ENCODE measurements at regions of chr7 and their contacts with region 1.

Region 1: GRCh38 chr7:66125052-66125708 is 10.5 kb downstream of the CRCP start:
- DNase-seq: no peak
- H3K4me3 ChIP-seq: no peak overlapping the region
- H3K4me3 Mint-ChIP-seq: peak overlapping the region in 4 of 8 donors; percentile 0 to 35 (median 10)
- H3K27ac ChIP-seq: no peak overlapping the region
- H3K27ac Mint-ChIP-seq: peak overlapping the region; percentile 0 to 89 (median 41)
- H3K4me1 ChIP-seq: peaks cover 26% of the 10 kb centered on the region
- H3K4me1 Mint-ChIP-seq: peaks cover 30 to 58% (median 40%) of the 10 kb centered on the region in 4 donors
- H3K27me3 ChIP-seq: no peaks in the 10 kb centered on the region
- H3K27me3 Mint-ChIP-seq: no peaks in the 10 kb centered on the region

Region 2: GRCh38 chr7:66157060-66157459 is 31.9 kb after region 1 on chr7:
- CTCF ChIA-PET with region 1: no interaction called
- POLR2A ChIA-PET with region 1: no interaction called
- intact Hi-C with region 1: loop called (anchors 2 kb)
- DNase-seq: no peak
- H3K4me3 ChIP-seq: no peak overlapping the region
- H3K4me3 Mint-ChIP-seq: no peak overlapping the region
- H3K27ac ChIP-seq: no peak overlapping the region
- H3K27ac Mint-ChIP-seq: no peak overlapping the region
- H3K4me1 ChIP-seq: no peaks in the 10 kb centered on the region
- H3K4me1 Mint-ChIP-seq: peaks cover 0 to 3% (median 0%) of the 10 kb centered on the region in 4 donors
- H3K27me3 ChIP-seq: no peaks in the 10 kb centered on the region
- H3K27me3 Mint-ChIP-seq: no peaks in the 10 kb centered on the region

Region 3: GRCh38 chr7:66281678-66282590 is 156.8 kb after region 1 on chr7:
- CTCF ChIA-PET with region 1: no interaction called
- POLR2A ChIA-PET with region 1: no interaction called
- intact Hi-C with region 1: no loop called
- DNase-seq: no peak
- H3K4me3 ChIP-seq: no peak overlapping the region
- H3K4me3 Mint-ChIP-seq: no peak overlapping the region
- H3K27ac ChIP-seq: no peak overlapping the region
- H3K27ac Mint-ChIP-seq: no peak overlapping the region
- H3K4me1 ChIP-seq: no peaks in the 10 kb centered on the region
- H3K4me1 Mint-ChIP-seq: no peaks in the 10 kb centered on the region
- H3K27me3 ChIP-seq: no peaks in the 10 kb centered on the region
- H3K27me3 Mint-ChIP-seq: peaks cover 0 to 3% of the 10 kb centered on the region in 2 donors